Activated CD8-positive, alpha-beta memory T cell treated with anti-CD3 and anti-CD28 coated beads, Interleukin-2, amount 10 ng/mL, durations not matched to agents 7 days and 5 days (primary cell): ENCODE measurements at regions of chr1 and their contacts with region 1.

Region 1: DNA sequence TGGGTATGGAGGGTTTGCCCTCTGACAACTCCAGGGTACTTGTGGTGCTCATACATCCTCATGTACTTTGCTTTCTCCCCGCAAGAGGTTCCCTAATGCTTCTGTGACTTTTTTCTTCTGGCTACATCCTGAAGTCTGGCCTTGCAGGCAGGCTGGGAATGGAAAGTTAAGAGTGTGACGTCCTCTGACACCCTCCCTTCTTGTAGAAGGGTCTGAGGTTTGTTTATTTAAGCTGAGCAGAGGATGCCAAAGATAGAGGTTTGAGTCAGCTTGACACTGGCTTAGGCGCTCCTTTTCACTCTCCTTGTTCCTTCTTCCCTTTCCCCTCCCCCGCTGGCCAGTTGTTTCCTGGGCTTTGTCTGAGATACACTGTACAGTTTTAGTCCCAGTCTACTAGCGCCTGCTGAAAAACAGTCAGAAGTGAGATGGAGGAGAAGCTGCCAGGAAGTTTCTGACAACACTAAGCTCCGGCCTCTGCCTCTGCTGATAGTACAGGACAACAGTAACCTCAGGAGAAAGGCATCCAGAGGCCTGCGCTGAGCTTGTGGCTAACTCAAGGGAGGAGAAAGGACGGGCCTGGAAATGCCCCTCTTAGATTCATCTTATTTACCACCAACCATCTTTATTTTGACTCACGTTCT is at the start of gene MACF1:
- DNase-seq: peak; percentile 71
- ATAC-seq: peak; percentile 61
- H3K4me3 Mint-ChIP-seq: peak within 1 kb of the TSS; percentile 89
- H3K27ac Mint-ChIP-seq: peak within 1 kb of the TSS; percentile 100
- H3K4me1 Mint-ChIP-seq: peaks cover 47% of the 10 kb centered on the region
- H3K27me3 Mint-ChIP-seq: no peaks in the 10 kb centered on the region
- total RNA-seq, gene MACF1: 319 to 488 TPM

Region 2: DNA sequence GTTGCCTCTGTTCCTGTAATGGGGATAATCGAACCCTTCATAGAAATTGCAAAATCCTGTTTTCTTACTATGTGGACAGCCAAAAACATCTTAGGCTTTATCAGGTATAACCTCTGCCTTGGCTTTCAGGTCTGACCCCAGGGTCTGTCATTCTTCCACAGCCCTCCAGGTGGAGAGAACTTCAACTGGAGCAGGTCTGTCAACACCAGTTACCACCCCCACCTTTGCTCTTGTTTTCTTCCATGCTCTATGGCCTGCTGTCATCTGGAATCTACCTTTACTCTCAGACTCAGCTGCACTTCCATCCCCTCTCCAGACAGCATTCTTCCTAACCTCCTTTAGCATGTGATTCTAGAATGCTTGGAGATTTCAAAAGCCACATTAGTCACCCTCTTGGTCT is 312.8 kb before region 1 on chr1:
- CTCF ChIA-PET with region 1: no interaction called
- DNase-seq: peak; percentile 35
- ATAC-seq: no peak
- H3K4me3 Mint-ChIP-seq: no peak overlapping the region
- H3K27ac Mint-ChIP-seq: no peak overlapping the region
- H3K4me1 Mint-ChIP-seq: no peaks in the 10 kb centered on the region
- H3K27me3 Mint-ChIP-seq: no peaks in the 10 kb centered on the region

Region 3: GRCh38 chr1:39170731-39171667 is 33.6 kb before region 1 on chr1:
- CTCF ChIA-PET with region 1: no interaction called
- DNase-seq: no peak
- ATAC-seq: no peak
- H3K4me3 Mint-ChIP-seq: no peak overlapping the region
- H3K27ac Mint-ChIP-seq: no peak overlapping the region
- H3K4me1 Mint-ChIP-seq: no peaks in the 10 kb centered on the region
- H3K27me3 Mint-ChIP-seq: peaks cover 2% of the 10 kb centered on the region

Region 4: GRCh38 chr1:39214998-39215873 is 10.7 kb after region 1 on chr1:
- CTCF ChIA-PET with region 1: interaction called, 40 read pairs
- DNase-seq: peak; percentile 67
- ATAC-seq: peak; percentile 79
- H3K4me3 Mint-ChIP-seq: peak overlapping the region; percentile 82
- H3K27ac Mint-ChIP-seq: peak overlapping the region; percentile 87
- H3K4me1 Mint-ChIP-seq: peaks cover 54% of the 10 kb centered on the region
- H3K27me3 Mint-ChIP-seq: no peaks in the 10 kb centered on the region